MCF 10A (cell line): ENCODE measurements at regions of chr9 and their contacts with region 1.

Region 1: DNA sequence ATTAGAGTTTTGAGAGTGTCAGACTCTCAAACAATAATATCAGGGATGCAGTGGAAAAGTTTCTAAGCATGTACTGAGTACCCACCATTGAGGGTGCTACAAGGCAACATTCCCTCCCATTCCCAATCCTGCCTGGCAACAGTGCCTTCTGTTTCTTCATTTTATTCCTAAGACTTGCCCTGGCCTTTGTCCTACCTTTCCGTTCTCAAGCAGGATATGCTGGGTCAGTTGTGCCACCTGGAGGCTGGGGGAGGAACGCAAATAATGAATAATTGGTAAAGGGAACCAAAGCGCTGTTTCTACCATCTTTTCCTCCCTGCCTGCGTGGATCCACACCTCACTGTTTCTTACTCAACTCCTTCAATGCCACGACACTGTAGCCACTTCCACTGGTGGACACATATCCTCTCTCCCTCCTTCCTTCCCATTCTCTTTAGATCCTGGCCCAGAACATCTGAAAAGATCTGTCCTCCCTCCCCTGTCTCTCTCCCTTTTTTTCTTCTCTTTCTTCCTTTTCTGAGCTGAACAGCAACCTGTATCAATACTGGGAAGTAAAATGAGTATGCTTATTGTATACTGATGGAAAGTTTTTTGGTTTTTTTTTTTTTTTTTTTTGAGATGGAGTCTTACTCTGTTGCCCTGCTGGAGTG is 149.5 kb downstream of the C9orf152 start:
- DNase-seq: peak; percentile 87
- H3K4me3 Mint-ChIP-seq: no peak overlapping the region
- H3K27ac Mint-ChIP-seq: peak overlapping the region; percentile 72
- H3K4me1 Mint-ChIP-seq: peaks cover 14% of the 10 kb centered on the region
- H3K27me3 Mint-ChIP-seq: no peaks in the 10 kb centered on the region
- CTCF ChIP-seq: peak; percentile 83

Region 2: DNA sequence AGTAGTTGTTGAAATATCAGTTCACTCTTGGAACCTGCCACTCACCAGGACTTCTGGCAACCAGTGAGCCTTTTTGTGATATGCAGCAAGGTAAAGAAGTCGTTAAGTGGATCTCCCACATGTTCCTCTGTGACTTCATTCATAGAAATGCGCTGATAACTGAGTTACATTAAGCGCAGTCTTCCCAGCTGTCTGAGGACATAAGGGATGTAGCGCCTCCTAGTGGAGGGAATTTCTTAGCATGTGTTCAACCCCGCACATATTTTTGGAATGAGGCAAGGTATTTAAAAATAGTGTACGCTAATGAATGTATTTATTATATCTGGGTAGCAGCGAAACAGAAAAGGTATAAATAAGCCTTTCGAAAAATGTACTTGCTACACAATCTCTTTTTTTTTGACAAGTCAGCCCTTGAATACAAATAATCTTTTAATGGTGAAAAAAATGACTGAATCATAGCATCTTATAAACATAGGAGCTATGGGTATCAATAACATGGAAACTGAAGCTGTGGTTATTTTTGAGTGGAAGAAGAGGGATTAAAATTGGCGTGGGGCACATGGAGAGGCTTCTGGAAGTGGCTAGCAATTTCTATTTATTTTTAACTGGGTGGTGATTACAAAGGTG is 240.5 kb before region 1 on chr9:
- CTCF ChIA-PET with region 1: interaction called, 3 read pairs
- POLR2A ChIA-PET with region 1: no interaction called
- intact Hi-C with region 1: loop called (anchors 1 kb)
- DNase-seq: peak; percentile 91
- H3K4me3 Mint-ChIP-seq: no peak overlapping the region
- H3K27ac Mint-ChIP-seq: no peak overlapping the region
- H3K4me1 Mint-ChIP-seq: no peaks in the 10 kb centered on the region
- H3K27me3 Mint-ChIP-seq: no peaks in the 10 kb centered on the region
- CTCF ChIP-seq: peak; percentile 84

Region 3: DNA sequence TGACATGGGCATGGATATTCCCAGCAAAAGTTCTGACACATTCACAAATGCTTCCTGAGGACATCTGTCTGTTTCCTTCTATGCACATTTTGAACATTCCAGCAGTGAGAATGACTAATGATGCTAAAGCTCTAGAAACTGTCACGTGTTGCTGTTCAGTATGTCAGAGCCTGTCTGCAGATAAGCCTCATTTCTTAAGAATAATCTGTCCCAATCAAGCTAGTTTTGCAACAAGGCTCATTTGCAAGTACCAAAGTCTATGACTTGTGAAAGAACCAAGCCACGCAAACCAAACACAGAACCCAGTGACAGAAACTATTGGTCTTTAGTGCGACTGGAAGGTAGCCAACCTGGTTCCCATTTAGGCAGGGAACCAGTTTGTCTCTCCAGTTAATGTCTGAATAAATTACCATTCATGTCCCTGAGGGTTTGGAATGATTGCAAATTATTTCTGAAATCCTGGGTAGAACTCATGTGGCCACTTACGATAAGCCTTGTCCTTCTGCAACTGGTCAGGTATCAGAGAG is 28.9 kb before region 1 on chr9:
- CTCF ChIA-PET with region 1: interaction called, 11 read pairs
- POLR2A ChIA-PET with region 1: interaction called, 51 read pairs
- intact Hi-C with region 1: no loop called
- DNase-seq: peak; percentile 88
- H3K4me3 Mint-ChIP-seq: peak overlapping the region; percentile 9
- H3K27ac Mint-ChIP-seq: peak overlapping the region; percentile 95
- H3K4me1 Mint-ChIP-seq: peaks cover 48% of the 10 kb centered on the region
- H3K27me3 Mint-ChIP-seq: no peaks in the 10 kb centered on the region
- CTCF ChIP-seq: no peak

Region 4: GRCh38 chr9:110069326-110070248 is 11.2 kb after region 1 on chr9:
- CTCF ChIA-PET with region 1: interaction called, 10 read pairs
- POLR2A ChIA-PET with region 1: interaction called, 3 read pairs
- intact Hi-C with region 1: no loop called
- DNase-seq: peak; percentile 37
- H3K4me3 Mint-ChIP-seq: no peak overlapping the region
- H3K27ac Mint-ChIP-seq: no peak overlapping the region
- H3K4me1 Mint-ChIP-seq: peaks cover 20% of the 10 kb centered on the region
- H3K27me3 Mint-ChIP-seq: no peaks in the 10 kb centered on the region
- CTCF ChIP-seq: no peak

Region 5: DNA sequence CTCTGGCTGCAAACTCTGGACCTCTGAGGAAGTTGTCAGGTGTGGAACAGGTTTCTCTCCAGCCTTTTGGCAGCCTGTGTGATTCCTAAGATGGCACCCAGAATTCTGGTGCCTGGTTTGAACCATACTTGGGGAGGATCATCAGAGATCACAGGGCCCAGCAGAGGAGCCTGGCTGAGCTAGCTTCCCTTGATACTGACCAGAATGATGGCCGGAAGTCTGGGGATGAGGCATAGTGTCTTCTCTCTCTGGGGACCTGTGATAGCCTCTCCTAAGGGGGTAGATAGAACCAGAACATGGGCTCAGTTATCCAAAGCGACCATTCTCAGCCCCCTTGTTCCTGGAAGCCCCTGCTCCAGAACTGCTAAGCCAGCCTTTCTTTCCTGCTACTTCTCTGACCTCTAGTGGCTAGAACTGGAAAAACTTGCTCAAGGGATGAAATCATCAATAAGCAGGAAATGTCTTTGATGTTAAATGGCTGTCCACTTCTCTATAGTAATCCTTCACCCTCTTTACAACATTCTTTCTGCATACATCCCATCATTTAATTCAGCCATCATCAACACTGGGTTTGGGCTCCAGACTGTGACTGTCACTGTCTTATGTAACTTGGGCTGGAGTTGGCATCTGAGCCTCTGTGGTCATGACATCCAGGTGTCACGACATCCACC is 94.4 kb after region 1 on chr9:
- CTCF ChIA-PET with region 1: interaction called, 26 read pairs
- POLR2A ChIA-PET with region 1: no interaction called
- intact Hi-C with region 1: loop called (anchors 1 kb)
- DNase-seq: peak; percentile 66
- H3K4me3 Mint-ChIP-seq: no peak overlapping the region
- H3K27ac Mint-ChIP-seq: no peak overlapping the region
- H3K4me1 Mint-ChIP-seq: no peaks in the 10 kb centered on the region
- H3K27me3 Mint-ChIP-seq: no peaks in the 10 kb centered on the region
- CTCF ChIP-seq: peak; percentile 75